HepG2 (cell line): ENCODE measurements at regions of chr4 and their contacts with region 1.

Region 1: GRCh38 chr4:141307241-141307689 is 86.6 kb downstream of the ZNF330 start:
- DNase-seq: peak; percentile 40
- ATAC-seq: peak; percentile 100
- H3K4me3 ChIP-seq: no peak overlapping the region
- H3K27ac ChIP-seq: no peak overlapping the region
- H3K4me1 ChIP-seq: no peaks in the 10 kb centered on the region
- H3K27me3 ChIP-seq: no peaks in the 10 kb centered on the region
- CTCF ChIP-seq: peak; percentile 84
- EP300 ChIP-seq: no peak
- POLR2A ChIP-seq: no peak
- RAD21 ChIP-seq: 0 out of 2 replicates have a peak, but pooled peaks have one; percentile 25

Region 2: DNA sequence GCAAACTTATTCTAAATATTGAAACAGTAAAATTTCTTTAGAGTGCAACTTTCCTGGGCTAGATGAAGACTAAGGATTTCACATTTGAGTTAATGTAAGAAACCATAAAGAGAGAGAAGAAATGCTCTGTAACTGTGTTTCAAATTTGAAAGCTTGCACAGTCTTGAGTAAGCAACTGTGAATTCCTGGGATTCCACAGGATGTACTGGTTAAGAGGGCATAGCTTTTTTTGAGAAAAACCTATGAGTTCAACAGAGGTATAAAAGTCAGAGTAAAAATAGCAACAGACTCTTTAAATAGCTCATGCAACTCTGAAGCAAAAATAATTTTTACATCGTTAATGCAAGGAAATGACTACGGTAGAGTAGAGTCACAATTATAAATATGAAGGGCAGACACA is 61.0 kb before region 1 on chr4:
- CTCF ChIA-PET with region 1: no interaction called
- POLR2A ChIA-PET with region 1: no interaction called
- in situ Hi-C with region 1: no loop called
- intact Hi-C with region 1: no loop called
- DNase-seq: no peak
- ATAC-seq: no peak
- H3K4me3 ChIP-seq: no peak overlapping the region
- H3K27ac ChIP-seq: no peak overlapping the region
- H3K4me1 ChIP-seq: no peaks in the 10 kb centered on the region
- H3K27me3 ChIP-seq: no peaks in the 10 kb centered on the region
- CTCF ChIP-seq: no peak
- EP300 ChIP-seq: no peak
- POLR2A ChIP-seq: no peak
- RAD21 ChIP-seq: no peak

Region 3: DNA sequence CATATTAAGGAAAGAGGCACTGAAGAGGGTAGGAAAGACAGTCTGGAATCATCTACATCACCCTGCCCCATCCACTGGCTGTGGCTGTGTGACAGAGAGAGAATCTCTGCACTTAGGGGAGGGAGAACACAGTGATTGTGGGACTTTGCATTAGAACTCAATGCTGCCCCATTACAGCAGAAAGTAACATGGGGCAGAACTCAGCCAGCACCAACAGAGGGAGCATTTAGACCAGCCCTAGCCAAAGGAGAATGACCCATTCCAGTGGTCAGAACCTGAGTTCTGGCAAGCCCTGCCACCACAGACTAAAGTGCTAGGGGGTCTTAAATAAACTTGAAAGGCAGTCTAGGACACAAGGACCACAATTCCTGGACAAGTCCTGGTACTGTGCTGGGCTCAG is 48.7 kb before region 1 on chr4:
- CTCF ChIA-PET with region 1: no interaction called
- POLR2A ChIA-PET with region 1: no interaction called
- in situ Hi-C with region 1: no loop called
- intact Hi-C with region 1: no loop called
- DNase-seq: no peak
- ATAC-seq: no peak
- H3K4me3 ChIP-seq: no peak overlapping the region
- H3K27ac ChIP-seq: no peak overlapping the region
- H3K4me1 ChIP-seq: no peaks in the 10 kb centered on the region
- H3K27me3 ChIP-seq: no peaks in the 10 kb centered on the region
- CTCF ChIP-seq: no peak
- EP300 ChIP-seq: no peak
- POLR2A ChIP-seq: no peak
- RAD21 ChIP-seq: no peak

Region 4: DNA sequence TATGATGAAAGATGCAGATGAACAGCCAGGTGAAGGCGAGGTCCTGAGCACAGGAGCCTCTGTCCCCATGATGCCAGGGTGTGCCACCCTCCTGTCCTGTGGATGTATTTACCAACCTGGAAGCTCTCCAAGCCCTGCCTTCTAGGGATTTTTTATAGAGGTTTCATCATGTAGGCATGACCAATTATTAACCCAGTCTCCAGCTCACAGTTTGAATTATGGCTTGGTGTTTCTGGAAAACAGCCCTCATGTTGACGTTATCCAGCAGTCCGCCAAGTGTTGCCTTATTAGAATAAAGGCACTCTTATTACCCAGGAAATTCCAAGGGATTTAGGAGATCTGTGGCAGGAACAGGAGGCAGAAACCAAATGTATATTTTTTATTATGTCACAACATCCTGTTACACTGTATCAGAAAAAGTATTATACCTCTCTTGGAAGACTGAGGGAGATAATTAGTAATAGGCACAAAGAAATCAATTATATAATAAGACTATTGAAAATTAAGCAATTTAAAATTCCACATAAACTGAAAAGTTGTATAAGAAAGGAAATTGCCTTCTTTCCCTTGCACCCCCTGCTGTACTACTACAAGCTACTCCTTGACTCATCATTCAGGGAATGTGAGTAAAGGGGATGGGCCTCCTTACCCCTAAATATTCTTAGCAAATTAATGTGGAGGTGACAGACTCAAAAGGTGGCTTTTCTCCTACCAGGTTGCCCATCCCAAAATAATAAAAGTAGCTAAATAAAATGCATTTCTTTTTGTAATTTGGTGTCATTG is 43.0 kb after region 1 on chr4:
- CTCF ChIA-PET with region 1: no interaction called
- POLR2A ChIA-PET with region 1: no interaction called
- in situ Hi-C with region 1: no loop called
- intact Hi-C with region 1: no loop called
- DNase-seq: no peak
- ATAC-seq: no peak
- H3K4me3 ChIP-seq: no peak overlapping the region
- H3K27ac ChIP-seq: no peak overlapping the region
- H3K4me1 ChIP-seq: no peaks in the 10 kb centered on the region
- H3K27me3 ChIP-seq: no peaks in the 10 kb centered on the region
- CTCF ChIP-seq: no peak
- EP300 ChIP-seq: no peak
- POLR2A ChIP-seq: no peak
- RAD21 ChIP-seq: no peak

Region 5: GRCh38 chr4:141375855-141376254 is 68.6 kb after region 1 on chr4:
- CTCF ChIA-PET with region 1: no interaction called
- POLR2A ChIA-PET with region 1: no interaction called
- in situ Hi-C with region 1: no loop called
- intact Hi-C with region 1: no loop called
- DNase-seq: peak; percentile 17
- ATAC-seq: peak; percentile 78
- H3K4me3 ChIP-seq: no peak overlapping the region
- H3K27ac ChIP-seq: no peak overlapping the region
- H3K4me1 ChIP-seq: no peaks in the 10 kb centered on the region
- H3K27me3 ChIP-seq: no peaks in the 10 kb centered on the region; a peak in 1 of 5 replicates
- CTCF ChIP-seq: no peak
- EP300 ChIP-seq: no peak
- POLR2A ChIP-seq: no peak
- RAD21 ChIP-seq: no peak

Region 6: GRCh38 chr4:141711014-141711610 is 403.8 kb after region 1 on chr4:
- CTCF ChIA-PET with region 1: no interaction called
- POLR2A ChIA-PET with region 1: no interaction called
- in situ Hi-C with region 1: no loop called
- intact Hi-C with region 1: loop called (anchors 2 kb)
- DNase-seq: no peak
- ATAC-seq: 0 out of 3 replicates have a peak, but pooled peaks have one; percentile 38
- H3K4me3 ChIP-seq: no peak overlapping the region
- H3K27ac ChIP-seq: no peak overlapping the region
- H3K4me1 ChIP-seq: no peaks in the 10 kb centered on the region
- H3K27me3 ChIP-seq: no peaks in the 10 kb centered on the region
- CTCF ChIP-seq: 0 out of 2 replicates have a peak, but pooled peaks have one; percentile 20
- EP300 ChIP-seq: no peak
- POLR2A ChIP-seq: no peak
- RAD21 ChIP-seq: no peak